ENCODE measurements at regions of chr17 and their contacts with region 1.

Region 1: GRCh38 chr17:64320613-64321553 is 57.8 kb upstream of the TEX2 start:
- DNase-seq: peak; percentile 89 to 96
- ATAC-seq: peak; percentile 88 to 95
- H3K4me3 ChIP-seq: 0 out of 3 replicates have a peak overlapping the region, but pooled peaks have one; percentile 17
- H3K27ac ChIP-seq: peak overlapping the region; percentile 13 to 40; a peak in 2 of 6 replicates
- H3K4me1 ChIP-seq: no peaks in the 10 kb centered on the region
- CTCF ChIP-seq: peak; percentile 96
- EP300 ChIP-seq: no peak; a peak in 1 of 5 replicates
- POLR2A ChIP-seq: no peak
- RAD21 ChIP-seq: peak; percentile 83 to 87

Region 2: GRCh38 chr17:64306850-64307463 is 13.9 kb before region 1 on chr17:
- CTCF ChIA-PET with region 1: interaction called, 59 read pairs
- POLR2A ChIA-PET with region 1: no interaction called
- DNase-seq: peak; percentile 73 to 76
- ATAC-seq: peak; percentile 68 to 83; a peak in 4 of 6 replicates
- H3K4me3 ChIP-seq: no peak overlapping the region
- H3K27ac ChIP-seq: no peak overlapping the region
- H3K4me1 ChIP-seq: no peaks in the 10 kb centered on the region
- CTCF ChIP-seq: peak; percentile 97
- EP300 ChIP-seq: no peak
- POLR2A ChIP-seq: no peak
- RAD21 ChIP-seq: peak; percentile 71

Region 3: DNA sequence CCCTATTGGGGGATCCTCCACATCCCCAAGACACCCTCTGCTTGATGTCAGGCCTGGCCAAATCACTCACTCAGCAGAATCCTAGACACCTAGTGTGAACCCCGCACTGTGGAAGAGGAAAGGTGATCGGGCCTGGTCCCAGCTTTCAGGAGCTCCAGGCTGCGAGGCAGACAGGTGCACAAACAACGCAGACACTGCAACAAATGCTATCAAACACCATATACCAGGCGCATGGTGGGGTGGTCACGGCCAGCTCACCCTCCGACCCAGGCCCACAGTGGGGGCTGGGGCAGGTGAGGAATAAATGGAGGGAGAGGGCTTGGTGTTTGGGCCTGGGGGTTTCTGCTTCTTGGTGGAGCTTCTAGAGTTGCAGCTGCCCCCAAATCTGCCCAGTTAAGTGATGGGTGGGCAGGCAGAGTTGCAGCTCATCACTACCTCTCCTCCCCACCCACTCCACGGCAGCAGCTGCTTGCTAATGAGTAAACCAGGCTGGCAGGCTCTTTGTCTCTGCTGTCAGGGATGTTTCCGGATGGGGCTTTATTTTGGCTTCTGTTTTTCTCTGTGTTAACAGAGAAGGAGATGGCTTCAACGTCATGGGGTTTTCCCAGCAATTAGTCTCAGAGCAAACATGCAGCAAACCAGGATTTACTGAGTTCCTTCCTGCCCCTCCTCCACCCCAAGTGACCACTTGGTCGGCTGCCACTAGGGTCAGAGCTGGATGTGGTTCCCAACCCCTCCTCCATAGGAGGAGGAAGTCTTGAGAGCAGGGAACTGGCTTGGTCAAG is 23.2 kb after region 1 on chr17:
- CTCF ChIA-PET with region 1: interaction called, 54 read pairs
- POLR2A ChIA-PET with region 1: no interaction called
- DNase-seq: peak; percentile 28 to 64
- ATAC-seq: peak; percentile 51 to 67; a peak in 5 of 6 replicates
- H3K4me3 ChIP-seq: no peak overlapping the region
- H3K27ac ChIP-seq: peak overlapping the region; percentile 13 to 59; a peak in 4 of 6 replicates
- H3K4me1 ChIP-seq: peaks cover 13% of the 10 kb centered on the region
- CTCF ChIP-seq: no peak
- EP300 ChIP-seq: no peak
- POLR2A ChIP-seq: no peak
- RAD21 ChIP-seq: no peak

Region 4: GRCh38 chr17:64399071-64399766 is 78.3 kb after region 1 on chr17:
- CTCF ChIA-PET with region 1: interaction called, 31 read pairs
- POLR2A ChIA-PET with region 1: interaction called, 3 read pairs
- DNase-seq: no peak
- ATAC-seq: no peak
- H3K4me3 ChIP-seq: no peak overlapping the region
- H3K27ac ChIP-seq: no peak overlapping the region
- H3K4me1 ChIP-seq: peaks cover 15% of the 10 kb centered on the region
- CTCF ChIP-seq: no peak
- EP300 ChIP-seq: no peak
- POLR2A ChIP-seq: no peak
- RAD21 ChIP-seq: no peak

Region 5: DNA sequence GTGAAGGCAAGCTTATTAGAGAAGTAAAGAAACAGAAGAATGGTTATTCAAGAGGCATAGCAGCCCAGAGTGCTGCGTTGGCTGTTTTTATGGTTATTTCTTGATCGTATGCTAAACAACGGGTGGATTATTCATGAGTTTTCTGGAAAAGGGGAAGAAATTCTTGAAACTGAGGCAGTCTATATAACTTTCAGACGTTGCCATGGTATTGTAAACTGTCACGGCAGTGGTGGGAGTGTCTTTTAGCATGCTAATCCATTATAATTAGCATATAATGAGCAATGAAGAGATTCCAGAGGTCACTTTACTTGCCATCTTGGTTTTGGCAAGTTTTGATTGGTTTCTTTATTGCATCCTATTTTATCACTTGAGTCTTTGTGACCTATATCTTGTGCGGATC is 110.7 kb after region 1 on chr17:
- CTCF ChIA-PET with region 1: interaction called, 11 read pairs
- POLR2A ChIA-PET with region 1: no interaction called
- DNase-seq: no peak
- ATAC-seq: no peak
- H3K4me3 ChIP-seq: no peak overlapping the region
- H3K27ac ChIP-seq: no peak overlapping the region
- H3K4me1 ChIP-seq: no peaks in the 10 kb centered on the region
- CTCF ChIP-seq: no peak
- EP300 ChIP-seq: no peak
- POLR2A ChIP-seq: no peak
- RAD21 ChIP-seq: no peak

Region 6: DNA sequence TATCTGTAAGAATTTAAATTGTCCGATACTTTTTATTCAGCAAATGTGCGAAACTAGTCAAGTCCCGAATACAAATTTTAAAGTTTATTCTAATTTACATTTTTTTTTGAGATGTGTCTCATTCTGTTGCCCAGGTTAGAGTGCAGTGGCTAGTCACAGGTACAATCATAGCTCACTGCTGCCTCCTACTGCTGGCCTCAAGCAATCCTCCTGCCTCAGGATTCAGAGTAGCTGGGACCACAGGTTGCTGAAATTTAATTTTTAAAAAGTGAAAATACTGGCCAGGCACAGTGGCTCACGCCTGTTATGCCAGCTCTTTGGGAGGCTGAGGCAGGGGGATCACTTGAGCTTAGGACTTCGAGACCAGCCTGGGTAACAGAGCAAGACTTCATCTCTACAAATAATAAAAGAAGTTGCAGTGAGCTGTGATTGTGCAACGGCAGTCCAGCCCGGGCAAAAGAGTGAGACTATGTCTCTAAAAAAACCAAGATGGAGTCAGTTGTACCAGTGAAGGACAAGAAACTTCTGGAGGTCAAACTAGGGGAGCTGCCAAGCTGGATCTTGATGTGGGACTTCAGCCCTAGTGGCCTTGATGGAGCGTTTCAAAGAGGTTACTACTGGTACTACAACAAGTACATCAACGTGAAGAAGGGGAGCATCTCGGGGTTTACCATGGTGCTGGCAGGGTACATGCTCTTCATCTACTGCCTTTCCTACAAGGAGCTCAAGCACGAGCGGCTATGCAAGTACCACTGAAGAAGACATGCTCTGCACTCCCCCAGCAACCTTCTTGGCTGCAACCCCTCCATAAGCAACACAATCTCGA is 170.4 kb after region 1 on chr17:
- CTCF ChIA-PET with region 1: interaction called, 24 read pairs
- POLR2A ChIA-PET with region 1: no interaction called
- DNase-seq: peak in 1 of 2 experiments; percentile 70
- ATAC-seq: peak; percentile 80 to 93
- H3K4me3 ChIP-seq: no peak overlapping the region
- H3K27ac ChIP-seq: no peak overlapping the region
- H3K4me1 ChIP-seq: peaks cover 26% of the 10 kb centered on the region
- CTCF ChIP-seq: peak; percentile 84
- EP300 ChIP-seq: no peak
- POLR2A ChIP-seq: no peak
- RAD21 ChIP-seq: peak; percentile 77 to 80